ENCODE measurements at regions of chr17 and their contacts with region 1.

Region 1: GRCh38 chr17:19306160-19307111 is 56.1 kb downstream of the B9D1 start:
- DNase-seq: peak; percentile 65
- H3K4me3 Mint-ChIP-seq: no peak overlapping the region
- H3K27ac Mint-ChIP-seq: no peak overlapping the region
- H3K4me1 Mint-ChIP-seq: peaks cover 23% of the 10 kb centered on the region
- H3K27me3 Mint-ChIP-seq: peaks cover 40% of the 10 kb centered on the region

Region 2: GRCh38 chr17:19270689-19271611 is 35.5 kb before region 1 on chr17:
- CTCF ChIA-PET with region 1: no interaction called
- intact Hi-C with region 1: loop called (anchors 5 kb)
- DNase-seq: no peak
- H3K4me3 Mint-ChIP-seq: no peak overlapping the region
- H3K27ac Mint-ChIP-seq: no peak overlapping the region
- H3K4me1 Mint-ChIP-seq: no peaks in the 10 kb centered on the region
- H3K27me3 Mint-ChIP-seq: peaks cover 11% of the 10 kb centered on the region

Region 3: GRCh38 chr17:19284005-19284959 is 22.2 kb before region 1 on chr17:
- CTCF ChIA-PET with region 1: no interaction called
- intact Hi-C with region 1: loop called (anchors 1 kb)
- DNase-seq: no peak
- H3K4me3 Mint-ChIP-seq: no peak overlapping the region
- H3K27ac Mint-ChIP-seq: no peak overlapping the region
- H3K4me1 Mint-ChIP-seq: peaks cover 11% of the 10 kb centered on the region
- H3K27me3 Mint-ChIP-seq: peaks cover 1% of the 10 kb centered on the region